ENCODE measurements at regions of chr11 and their contacts with region 1.

Region 1: DNA sequence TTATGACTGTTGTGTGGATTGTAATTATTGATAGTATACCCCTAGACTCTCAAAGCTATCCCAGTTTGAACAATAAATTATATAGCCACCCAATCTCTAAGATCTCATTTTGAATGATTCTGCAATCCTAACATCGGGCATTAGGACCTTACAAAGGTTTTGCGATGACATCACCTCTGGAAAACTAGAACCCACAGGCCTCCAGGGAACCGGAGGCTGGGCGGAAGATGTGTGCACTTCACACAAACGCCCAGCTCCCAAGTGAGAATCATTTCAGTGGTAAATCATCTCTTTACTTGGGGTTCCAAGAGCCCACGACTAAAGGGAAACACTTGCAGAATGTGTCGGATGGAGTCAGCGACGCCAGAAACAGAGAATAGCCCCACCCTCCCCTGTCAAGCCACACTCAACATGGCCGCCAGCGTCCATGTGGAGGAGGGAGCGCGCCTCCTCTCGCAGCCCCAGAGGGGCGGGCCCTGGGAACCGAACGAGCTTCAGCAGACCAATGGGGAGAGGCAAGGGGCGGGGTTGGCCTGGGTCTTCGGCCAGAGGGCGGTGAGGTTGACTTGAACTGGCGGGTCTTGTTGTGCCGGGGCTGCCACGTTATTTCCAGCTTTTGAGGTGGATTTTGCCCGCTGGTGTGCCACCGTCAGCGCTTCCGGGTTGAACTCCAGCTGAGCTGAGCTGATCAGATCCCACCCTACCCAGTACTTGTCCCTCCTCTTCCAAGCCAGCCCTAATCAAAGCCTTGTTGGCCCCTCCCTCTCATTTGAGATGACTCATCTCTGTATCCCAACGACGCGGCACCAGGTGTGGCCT is 8.4 kb upstream of the MRPL48 start:
- DNase-seq: peak; percentile 99
- H3K4me3 Mint-ChIP-seq: peak overlapping the region; percentile 83
- H3K27ac Mint-ChIP-seq: peak overlapping the region; percentile 92
- H3K4me1 Mint-ChIP-seq: peaks cover 26% of the 10 kb centered on the region
- H3K27me3 Mint-ChIP-seq: no peaks in the 10 kb centered on the region
- CTCF ChIP-seq: no peak

Region 2: GRCh38 chr11:73177778-73178577 is 601.3 kb before region 1 on chr11:
- CTCF ChIA-PET with region 1: no interaction called
- intact Hi-C with region 1: no loop called
- DNase-seq: peak; percentile 82
- H3K4me3 Mint-ChIP-seq: no peak overlapping the region
- H3K27ac Mint-ChIP-seq: no peak overlapping the region
- H3K4me1 Mint-ChIP-seq: peaks cover 13% of the 10 kb centered on the region
- H3K27me3 Mint-ChIP-seq: peaks cover 18% of the 10 kb centered on the region
- CTCF ChIP-seq: peak; percentile 76

Region 3: GRCh38 chr11:73760679-73761402 is 18.5 kb before region 1 on chr11 and contains the start of gene RAB6A:
- CTCF ChIA-PET with region 1: interaction called, 26 read pairs
- intact Hi-C with region 1: loop called (anchors 2 kb)
- DNase-seq: peak; percentile 99
- H3K4me3 Mint-ChIP-seq: peak within 1 kb of the TSS; percentile 91
- H3K27ac Mint-ChIP-seq: peak within 1 kb of the TSS; percentile 78
- H3K4me1 Mint-ChIP-seq: no peaks in the 10 kb centered on the region
- H3K27me3 Mint-ChIP-seq: no peaks in the 10 kb centered on the region
- CTCF ChIP-seq: no peak
- total RNA-seq, gene RAB6A: 92.3 and 99.5 TPM in 2 replicates